ENCODE measurements at regions of chr16 and their contacts with region 1.

Region 1: GRCh38 chr16:19094541-19095365 is 19.0 kb upstream of the ITPRIPL2 start:
- DNase-seq: peak; percentile 77
- ATAC-seq: peak; percentile 95
- H3K4me3 ChIP-seq: peak overlapping the region; percentile 31 to 54
- H3K27ac ChIP-seq: peak overlapping the region; percentile 93
- H3K4me1 ChIP-seq: peaks cover 26% of the 10 kb centered on the region
- H3K27me3 ChIP-seq: no peaks in the 10 kb centered on the region
- CTCF ChIP-seq: peak; percentile 75

Region 2: DNA sequence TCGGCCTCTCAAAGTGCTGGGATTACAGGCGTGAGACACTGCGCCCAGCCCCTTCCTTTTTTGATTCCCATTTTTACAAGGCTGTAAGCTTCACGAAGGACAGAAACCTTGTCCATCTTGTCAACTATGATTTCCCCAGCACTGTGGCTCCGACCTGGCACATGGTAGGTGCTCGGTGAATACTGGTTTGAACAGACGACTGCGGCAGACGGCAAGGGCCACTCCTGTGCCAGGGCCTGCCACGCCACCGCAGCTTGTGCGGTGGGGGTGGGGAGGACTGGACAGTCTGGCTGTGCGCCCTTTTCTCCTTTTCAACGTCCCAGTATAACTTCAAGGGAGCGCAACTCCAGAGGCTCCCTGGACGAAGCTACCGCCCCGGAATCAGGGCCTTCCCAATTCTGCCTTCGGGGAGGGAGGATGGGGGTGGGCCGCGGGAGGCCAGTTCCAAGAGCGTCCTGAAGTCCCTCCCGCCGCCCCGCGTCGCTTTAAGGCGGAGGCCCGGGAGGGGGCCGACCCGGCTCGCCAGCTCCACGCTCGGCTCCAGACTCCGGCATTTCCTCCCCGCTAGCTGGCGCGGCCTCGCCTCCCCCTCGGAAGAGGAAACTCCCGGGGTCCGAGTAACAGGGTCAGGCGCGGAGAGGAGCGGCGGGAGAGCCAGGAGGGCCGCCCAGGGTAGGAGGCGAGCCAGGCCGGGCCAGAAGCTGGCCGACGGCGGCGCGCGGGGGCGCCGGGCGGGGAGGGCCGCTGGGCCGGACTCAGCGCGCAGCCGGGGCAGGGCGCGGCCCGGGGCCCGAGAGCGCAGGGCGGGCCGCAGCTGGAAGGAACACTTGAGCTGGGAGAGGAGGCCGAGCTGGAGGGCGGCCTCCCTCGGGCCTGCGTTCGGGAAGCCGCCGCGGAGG is 18.9 kb after region 1 on chr16 and contains the start of gene ITPRIPL2:
- CTCF ChIA-PET with region 1: interaction called, 13 read pairs
- POLR2A ChIA-PET with region 1: interaction called, 6 read pairs
- in situ Hi-C with region 1: no loop called
- intact Hi-C with region 1: no loop called
- DNase-seq: peak; percentile 84
- ATAC-seq: peak; percentile 89
- H3K4me3 ChIP-seq: peak within 1 kb of the TSS; percentile 65 to 78
- H3K27ac ChIP-seq: peak within 1 kb of the TSS; percentile 95
- H3K4me1 ChIP-seq: peaks cover 50% of the 10 kb centered on the region
- H3K27me3 ChIP-seq: no peaks in the 10 kb centered on the region
- CTCF ChIP-seq: no peak
- total RNA-seq, gene ITPRIPL2: 83.2 TPM

Region 3: DNA sequence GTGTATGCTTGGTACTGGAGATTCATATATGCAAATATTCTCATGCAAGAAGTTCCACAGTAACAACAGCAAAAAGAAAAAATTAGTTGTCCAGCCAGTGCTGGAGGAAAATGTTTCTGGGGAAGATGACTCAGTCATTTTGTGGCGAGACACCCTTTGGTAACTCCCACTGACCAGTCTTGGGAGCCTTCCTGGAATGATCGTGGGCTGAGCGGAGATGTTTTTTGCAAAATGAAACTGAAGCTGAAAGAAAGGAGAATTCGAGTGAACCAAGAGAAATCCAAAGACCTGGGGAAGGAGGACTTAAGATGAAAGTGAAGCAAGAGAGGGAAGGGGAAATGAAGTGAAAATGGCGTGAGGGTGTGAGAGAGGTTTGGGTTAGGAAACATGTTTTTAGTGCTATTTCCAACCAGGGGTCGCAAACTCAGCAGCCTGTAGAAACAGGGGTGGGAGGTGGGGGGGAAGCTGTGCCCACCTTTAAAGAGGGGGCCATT is 24.2 kb after region 1 on chr16:
- CTCF ChIA-PET with region 1: interaction called, 11 read pairs
- POLR2A ChIA-PET with region 1: interaction called, 11 read pairs
- in situ Hi-C with region 1: no loop called
- intact Hi-C with region 1: no loop called
- DNase-seq: no peak
- ATAC-seq: no peak
- H3K4me3 ChIP-seq: peak overlapping the region; percentile 15 to 21
- H3K27ac ChIP-seq: peak overlapping the region; percentile 78
- H3K4me1 ChIP-seq: peaks cover 43% of the 10 kb centered on the region
- H3K27me3 ChIP-seq: no peaks in the 10 kb centered on the region
- CTCF ChIP-seq: no peak

Region 4: DNA sequence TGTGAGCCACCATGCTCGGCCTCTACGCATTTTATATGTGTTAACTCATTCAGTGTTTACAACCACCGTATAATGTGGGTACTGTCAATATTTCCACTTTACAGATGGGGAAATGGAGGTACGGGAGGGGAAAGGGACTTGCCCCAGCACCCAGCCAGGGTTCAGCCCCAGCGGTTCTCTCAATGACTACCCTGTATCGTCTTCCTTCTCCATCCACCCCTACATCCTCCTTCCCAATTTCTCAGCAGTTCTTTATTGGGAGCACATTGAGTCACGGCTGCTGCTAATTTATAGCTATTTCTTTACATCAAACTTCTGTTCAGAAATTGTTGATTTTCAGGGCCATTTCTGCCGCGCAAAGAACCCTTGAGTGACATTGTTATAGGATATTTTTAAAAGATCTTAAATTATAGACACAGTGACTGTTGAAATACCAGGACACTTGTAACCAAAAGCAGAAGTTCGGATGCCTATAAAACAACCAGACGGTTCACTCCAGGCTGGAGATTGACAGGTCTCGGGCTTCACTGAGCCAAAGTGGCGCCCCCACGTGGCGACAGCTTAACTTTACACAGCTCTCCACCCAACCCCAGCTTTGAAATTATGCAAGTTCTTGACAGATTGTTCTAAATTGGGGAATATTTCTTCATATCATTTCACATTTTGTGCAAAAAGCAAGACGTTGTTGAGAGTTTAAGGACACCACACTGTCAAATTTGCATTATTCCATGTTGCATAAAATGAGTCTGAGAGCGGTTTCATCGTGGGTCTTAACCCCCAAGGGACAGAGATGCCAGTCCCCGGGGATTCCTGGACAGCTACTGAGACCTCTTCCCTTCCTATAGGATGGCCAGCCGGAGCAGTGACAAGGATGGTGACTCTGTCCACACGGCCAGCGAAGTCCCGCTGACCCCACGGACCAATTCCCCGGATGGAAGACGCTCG is 85.1 kb after region 1 on chr16:
- CTCF ChIA-PET with region 1: interaction called, 12 read pairs
- POLR2A ChIA-PET with region 1: no interaction called
- in situ Hi-C with region 1: no loop called
- intact Hi-C with region 1: loop called (anchors 5 kb)
- DNase-seq: peak; percentile 39
- ATAC-seq: peak; percentile 84
- H3K4me3 ChIP-seq: no peak overlapping the region
- H3K27ac ChIP-seq: no peak overlapping the region
- H3K4me1 ChIP-seq: no peaks in the 10 kb centered on the region
- H3K27me3 ChIP-seq: no peaks in the 10 kb centered on the region
- CTCF ChIP-seq: peak; percentile 94

Region 5: GRCh38 chr16:19184823-19185509 is 90.2 kb after region 1 on chr16:
- CTCF ChIA-PET with region 1: interaction called, 12 read pairs
- POLR2A ChIA-PET with region 1: interaction called, 10 read pairs
- in situ Hi-C with region 1: no loop called
- intact Hi-C with region 1: loop called (anchors 5 kb)
- DNase-seq: no peak
- ATAC-seq: no peak
- H3K4me3 ChIP-seq: no peak overlapping the region
- H3K27ac ChIP-seq: no peak overlapping the region
- H3K4me1 ChIP-seq: no peaks in the 10 kb centered on the region
- H3K27me3 ChIP-seq: no peaks in the 10 kb centered on the region
- CTCF ChIP-seq: no peak

Region 6: GRCh38 chr16:19822533-19822932 is 727.8 kb after region 1 on chr16:
- CTCF ChIA-PET with region 1: no interaction called
- POLR2A ChIA-PET with region 1: no interaction called
- in situ Hi-C with region 1: no loop called
- intact Hi-C with region 1: no loop called
- DNase-seq: no peak
- ATAC-seq: no peak
- H3K4me3 ChIP-seq: no peak overlapping the region
- H3K27ac ChIP-seq: no peak overlapping the region
- H3K4me1 ChIP-seq: no peaks in the 10 kb centered on the region
- H3K27me3 ChIP-seq: no peaks in the 10 kb centered on the region
- CTCF ChIP-seq: no peak